Sigmoid colon (tissue), 7 donors: ENCODE measurements at regions of chr10 and their contacts with region 1.

Region 1: DNA sequence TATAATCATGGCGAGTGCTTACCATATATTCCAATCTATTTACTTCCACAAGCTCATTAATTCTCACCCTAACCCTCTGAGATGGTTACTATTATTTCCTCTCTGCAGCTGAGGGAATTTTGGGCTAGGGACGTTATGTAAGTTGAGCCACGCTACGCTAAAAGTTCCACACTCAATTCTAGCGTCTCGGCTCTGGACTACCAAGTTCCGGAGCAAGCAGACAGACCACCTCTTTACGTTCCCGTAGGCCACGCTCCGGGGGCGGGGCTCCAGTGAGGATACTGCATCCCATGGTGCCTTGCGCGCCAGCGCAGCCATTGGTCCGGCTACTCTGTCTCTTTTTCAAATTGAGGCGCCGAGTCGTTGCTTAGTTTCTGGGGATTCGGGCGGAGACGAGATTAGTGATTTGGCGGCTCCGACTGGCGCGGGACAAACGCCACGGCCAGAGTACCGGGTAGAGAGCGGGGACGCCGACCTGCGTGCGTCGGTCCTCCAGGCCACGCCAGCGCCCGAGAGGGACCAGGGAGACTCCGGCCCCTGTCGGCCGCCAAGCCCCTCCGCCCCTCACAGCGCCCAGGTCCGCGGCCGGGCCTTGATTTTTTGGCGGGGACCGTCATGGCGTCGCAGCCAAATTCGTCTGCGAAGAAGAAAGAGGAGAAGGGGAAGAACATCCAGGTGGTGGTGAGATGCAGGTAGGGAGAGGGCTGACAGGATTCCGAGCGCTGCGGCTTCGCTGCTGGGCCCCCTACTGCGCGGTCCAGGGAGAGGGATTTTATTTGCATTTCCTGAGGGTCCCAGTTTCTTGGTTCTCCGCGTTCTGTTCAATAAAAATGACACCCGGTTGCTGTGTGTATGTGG is at the start of gene KIF11:
- DNase-seq: peak; percentile 98
- H3K4me3 ChIP-seq: peak within 1 kb of the TSS; percentile 44 to 75 (median 60)
- H3K27ac ChIP-seq: peak within 1 kb of the TSS; percentile 87 to 97 (median 96)
- H3K4me1 ChIP-seq: peaks cover 0 to 23% (median 11%) of the 10 kb centered on the region in 4 donors
- H3K27me3 ChIP-seq: no peaks in the 10 kb centered on the region
- CTCF ChIP-seq: no peak
- EP300 ChIP-seq: peak in 1 of 4 donors; percentile 36
- POLR2A ChIP-seq: peak; percentile 87 to 91
- total RNA-seq, gene KIF11: 0.16 to 0.95 (median 0.77) TPM

Region 2: GRCh38 chr10:92517034-92517655 is 75.8 kb before region 1 on chr10:
- intact Hi-C with region 1: loop called (anchors 5 kb)
- DNase-seq: peak; percentile 76
- H3K4me3 ChIP-seq: no peak overlapping the region
- H3K27ac ChIP-seq: no peak overlapping the region
- H3K4me1 ChIP-seq: no peaks in the 10 kb centered on the region
- H3K27me3 ChIP-seq: no peaks in the 10 kb centered on the region
- CTCF ChIP-seq: peak; percentile 35 to 69 (median 66)
- EP300 ChIP-seq: no peak
- POLR2A ChIP-seq: no peak

Region 3: GRCh38 chr10:92689663-92690210 is 96.7 kb after region 1 on chr10 and contains the start of gene HHEX:
- intact Hi-C with region 1: loop called (anchors 2 kb)
- DNase-seq: peak; percentile 77
- H3K4me3 ChIP-seq: peak within 1 kb of the TSS; percentile 73 to 81 (median 76)
- H3K27ac ChIP-seq: peak within 1 kb of the TSS; percentile 79 to 92 (median 86)
- H3K4me1 ChIP-seq: peaks cover 0 to 34% (median 15%) of the 10 kb centered on the region in 4 donors
- H3K27me3 ChIP-seq: peaks cover 0 to 27% (median 2%) of the 10 kb centered on the region in 3 donors
- CTCF ChIP-seq: no peak
- EP300 ChIP-seq: no peak
- POLR2A ChIP-seq: no peak
- total RNA-seq, gene HHEX: 3.5 to 8.9 (median 6.6) TPM

Region 4: GRCh38 chr10:92848441-92849233 is 255.6 kb after region 1 on chr10 and contains the start of gene EXOC6:
- intact Hi-C with region 1: loop called (anchors 2 kb)
- DNase-seq: peak; percentile 88
- H3K4me3 ChIP-seq: peak within 1 kb of the TSS; percentile 89 to 99 (median 94)
- H3K27ac ChIP-seq: peak within 1 kb of the TSS; percentile 86 to 90 (median 88)
- H3K4me1 ChIP-seq: peaks cover 0 to 21% (median 12%) of the 10 kb centered on the region in 4 donors
- H3K27me3 ChIP-seq: no peaks in the 10 kb centered on the region
- CTCF ChIP-seq: peak in 1 of 4 experiments; percentile 19
- EP300 ChIP-seq: no peak
- POLR2A ChIP-seq: no peak
- total RNA-seq, gene EXOC6: 16.6 to 20.2 (median 18.9) TPM